Activated B cell treated with CpG ODN at 0.5 μM for 24 hours (primary cell): ENCODE measurements at regions of chr16 and their contacts with region 1.

Region 1: DNA sequence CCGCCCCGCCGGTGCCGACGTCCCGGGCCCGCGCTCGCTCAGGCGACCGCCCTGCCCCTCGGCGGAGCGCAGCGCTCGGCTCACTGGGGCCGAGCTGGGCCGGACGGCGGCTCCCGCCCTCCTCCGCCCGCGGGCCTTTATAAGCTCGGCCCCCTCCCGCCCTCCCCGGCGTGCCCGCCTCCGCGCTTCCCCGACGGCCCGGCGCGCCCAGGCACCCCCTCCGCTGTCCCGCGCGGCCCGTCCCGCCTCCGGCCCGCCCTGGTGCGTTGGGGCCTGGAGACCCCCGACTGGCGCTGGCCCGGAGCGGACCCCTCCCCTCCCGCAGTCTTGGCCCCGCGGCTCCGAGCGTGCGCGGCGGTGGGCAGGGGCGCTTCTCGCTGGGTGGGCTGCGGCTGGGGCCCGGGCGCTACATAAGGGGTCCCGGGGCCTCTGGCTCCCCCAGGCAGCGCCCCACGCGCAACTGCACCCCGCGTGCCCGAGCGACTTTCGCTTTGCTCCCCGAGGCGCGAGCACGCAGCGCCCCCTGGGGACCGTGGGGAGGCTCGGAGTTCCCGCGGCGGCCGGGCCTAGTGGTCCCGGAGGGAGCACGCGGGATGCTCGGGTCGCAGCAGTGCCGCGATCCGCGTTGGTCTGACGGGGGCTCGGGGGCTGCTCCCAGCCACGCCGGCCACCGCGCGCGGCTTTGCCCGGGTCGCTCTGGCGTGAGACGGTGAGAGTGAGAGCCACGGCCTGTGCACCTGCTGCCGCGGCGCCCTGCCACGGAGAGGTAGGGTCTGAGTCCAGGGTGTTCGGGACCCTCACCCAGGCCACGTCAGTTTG is at the start of gene PIEZO1:
- DNase-seq: peak; percentile 78
- ATAC-seq: peak; percentile 28
- H3K4me3 Mint-ChIP-seq: peak within 1 kb of the TSS; percentile 85
- H3K27ac Mint-ChIP-seq: peak within 1 kb of the TSS; percentile 76
- H3K4me1 Mint-ChIP-seq: peaks cover 47% of the 10 kb centered on the region
- H3K27me3 Mint-ChIP-seq: no peaks in the 10 kb centered on the region
- CTCF ChIP-seq: no peak
- total RNA-seq, gene PIEZO1: 75.2 and 85.9 TPM in 2 replicates

Region 2: DNA sequence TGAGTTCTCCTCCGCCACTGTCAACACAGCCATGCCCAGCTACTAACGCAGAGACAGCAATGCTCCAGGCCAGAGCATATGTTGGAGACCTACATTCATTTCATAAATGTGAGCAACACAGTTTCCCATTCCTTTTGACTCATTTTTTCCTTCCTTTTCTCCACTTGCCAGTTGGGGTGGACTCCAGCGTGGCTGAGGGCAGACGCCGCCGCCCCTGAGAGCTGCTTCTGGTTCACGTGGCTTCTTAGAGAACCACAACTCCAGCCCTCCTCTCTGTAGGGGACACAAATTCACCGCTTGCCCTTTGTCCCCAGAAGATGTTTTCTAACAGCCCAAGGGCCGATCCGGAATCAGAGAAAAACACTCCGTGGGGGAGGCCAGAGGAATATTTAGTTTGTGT is 1246.7 kb before region 1 on chr16:
- CTCF ChIA-PET with region 1: no interaction called
- POLR2A ChIA-PET with region 1: no interaction called
- intact Hi-C with region 1: no loop called
- DNase-seq: no peak
- ATAC-seq: no peak
- H3K4me3 Mint-ChIP-seq: no peak overlapping the region
- H3K27ac Mint-ChIP-seq: no peak overlapping the region
- H3K4me1 Mint-ChIP-seq: no peaks in the 10 kb centered on the region
- H3K27me3 Mint-ChIP-seq: peaks cover 31% of the 10 kb centered on the region
- CTCF ChIP-seq: no peak

Region 3: DNA sequence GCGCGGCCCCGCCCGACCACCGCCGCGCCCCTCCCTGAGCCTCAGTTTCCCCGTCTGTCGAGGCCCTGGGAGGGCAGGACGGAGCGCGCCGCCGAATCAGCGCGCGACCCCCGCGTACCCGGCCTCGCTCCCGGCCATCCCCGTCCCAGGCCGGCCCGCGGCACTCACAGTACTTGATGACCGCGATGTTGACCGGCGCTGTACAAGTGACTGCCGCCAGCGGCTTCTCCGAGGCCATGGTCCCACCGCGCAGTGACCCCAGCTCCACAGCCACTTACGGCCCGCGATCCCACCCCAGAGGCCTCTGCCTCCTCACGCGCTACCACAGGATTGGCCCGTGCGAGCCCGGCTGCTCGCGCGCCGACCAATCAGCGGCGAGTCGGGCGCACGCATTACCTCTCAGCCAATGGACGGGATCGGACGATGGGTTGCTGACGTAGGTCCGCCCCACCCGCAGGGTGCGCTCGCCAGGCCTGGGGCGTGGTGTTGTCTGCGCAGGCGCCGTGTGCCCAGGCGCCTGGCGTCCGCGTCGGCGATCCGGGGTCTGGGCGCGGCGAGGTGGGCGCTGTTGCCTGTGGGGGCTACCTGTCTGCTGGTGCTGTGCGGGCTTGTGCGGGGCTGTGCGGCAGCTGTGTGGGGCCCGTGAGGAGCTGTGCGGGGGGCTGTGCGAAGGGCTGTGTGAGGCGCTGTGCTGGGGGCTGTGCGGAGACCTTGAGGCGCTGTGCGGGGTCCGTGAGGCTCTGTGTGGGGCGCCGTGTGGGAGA is 122.3 kb before region 1 on chr16 and contains the start of gene MVD:
- CTCF ChIA-PET with region 1: no interaction called
- POLR2A ChIA-PET with region 1: no interaction called
- intact Hi-C with region 1: loop called (anchors 5 kb)
- DNase-seq: peak; percentile 89
- ATAC-seq: peak; percentile 94
- H3K4me3 Mint-ChIP-seq: peak within 1 kb of the TSS; percentile 94
- H3K27ac Mint-ChIP-seq: peak within 1 kb of the TSS; percentile 90
- H3K4me1 Mint-ChIP-seq: peaks cover 31% of the 10 kb centered on the region
- H3K27me3 Mint-ChIP-seq: no peaks in the 10 kb centered on the region
- CTCF ChIP-seq: no peak
- total RNA-seq, gene MVD: 115 and 140 TPM in 2 replicates

Region 4: DNA sequence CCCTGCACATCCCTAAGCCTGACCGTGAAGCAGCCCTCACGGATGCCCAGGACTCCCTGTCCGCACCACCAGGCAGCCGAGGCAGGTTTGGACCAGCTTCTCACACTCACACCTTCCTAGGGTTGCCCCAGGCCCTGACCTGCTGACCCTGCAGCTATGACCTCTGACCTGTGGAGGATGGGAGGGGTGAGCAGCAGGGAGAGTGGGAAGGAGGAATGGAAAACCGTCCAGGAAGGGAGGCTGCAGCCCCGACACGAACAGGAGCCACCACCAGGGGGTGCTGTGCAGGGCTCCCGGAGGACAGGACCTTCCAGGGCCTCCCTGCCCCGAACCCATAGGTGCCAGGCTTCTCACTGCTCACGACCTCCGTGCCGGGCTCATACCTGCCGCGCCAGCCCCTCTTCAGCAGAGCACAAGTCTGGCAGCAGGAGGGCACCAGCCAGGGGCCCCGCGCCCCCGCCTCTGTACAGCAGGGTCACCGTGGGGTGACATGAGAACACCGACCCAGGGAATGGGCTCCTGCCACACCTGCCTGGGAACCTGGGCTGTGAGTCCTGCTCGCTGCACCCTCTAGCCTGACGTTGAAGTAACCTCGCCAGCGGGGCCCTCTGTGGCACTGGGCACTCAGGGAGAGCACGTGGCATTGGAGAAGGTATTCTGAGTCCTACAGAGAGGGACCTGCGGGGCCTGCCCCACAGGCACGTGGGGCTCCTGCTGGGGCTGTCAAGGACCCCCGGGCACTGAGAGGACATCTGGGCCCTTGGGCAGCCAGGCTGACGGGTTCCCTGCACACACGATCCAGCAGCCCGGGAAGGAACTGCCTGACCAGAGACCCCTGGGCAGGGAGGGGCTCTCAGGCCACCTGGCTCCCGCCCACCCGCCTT is 41.4 kb before region 1 on chr16:
- CTCF ChIA-PET with region 1: interaction called, 12 read pairs
- POLR2A ChIA-PET with region 1: interaction called, 30 read pairs
- intact Hi-C with region 1: loop called (anchors 1 kb)
- DNase-seq: peak; percentile 67
- ATAC-seq: no peak
- H3K4me3 Mint-ChIP-seq: no peak overlapping the region
- H3K27ac Mint-ChIP-seq: no peak overlapping the region
- H3K4me1 Mint-ChIP-seq: peaks cover 55% of the 10 kb centered on the region
- H3K27me3 Mint-ChIP-seq: no peaks in the 10 kb centered on the region
- CTCF ChIP-seq: peak; percentile 89

Region 5: GRCh38 chr16:88770461-88771293 is 14.6 kb before region 1 on chr16:
- CTCF ChIA-PET with region 1: interaction called, 9 read pairs
- POLR2A ChIA-PET with region 1: interaction called, 30 read pairs
- intact Hi-C with region 1: loop called (anchors 1 kb)
- DNase-seq: peak; percentile 43
- ATAC-seq: peak; percentile 54
- H3K4me3 Mint-ChIP-seq: peak overlapping the region; percentile 19
- H3K27ac Mint-ChIP-seq: peak overlapping the region; percentile 35
- H3K4me1 Mint-ChIP-seq: peaks cover 61% of the 10 kb centered on the region
- H3K27me3 Mint-ChIP-seq: no peaks in the 10 kb centered on the region
- CTCF ChIP-seq: no peak

Region 6: DNA sequence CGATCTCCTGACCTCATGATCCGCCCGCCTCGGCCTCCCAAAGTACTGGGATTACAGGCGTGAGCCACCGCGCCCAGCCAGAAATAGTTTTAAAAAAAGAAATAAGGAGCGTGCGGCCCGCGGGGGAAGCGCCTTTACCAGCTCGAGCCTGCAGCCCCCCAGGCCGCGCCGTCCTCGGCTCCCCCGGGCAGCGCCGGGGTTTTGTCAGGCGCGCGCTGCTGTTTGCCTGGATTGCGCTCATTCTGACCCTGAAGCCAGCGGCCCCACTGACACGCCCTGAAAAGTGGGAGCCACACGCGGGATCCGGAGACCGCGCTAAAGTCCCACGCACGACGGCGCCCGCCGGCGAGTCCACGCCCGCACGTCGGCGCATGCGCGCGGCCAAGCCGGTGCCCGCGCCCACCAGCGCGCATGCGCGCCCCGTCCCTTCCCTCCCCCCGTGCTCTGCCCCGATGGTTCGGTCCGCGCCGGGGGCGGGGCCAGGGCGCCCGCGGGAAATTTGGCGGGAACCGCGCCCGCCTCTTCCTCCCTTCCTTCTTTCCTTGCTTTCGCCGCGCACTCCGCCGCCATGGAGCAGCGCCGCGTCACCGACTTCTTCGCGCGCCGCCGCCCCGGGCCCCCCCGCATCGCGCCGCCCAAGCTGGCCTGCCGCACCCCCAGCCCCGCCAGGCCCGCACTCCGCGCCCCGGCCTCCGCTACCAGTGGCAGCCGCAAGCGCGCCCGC is 18.1 kb after region 1 on chr16 and contains the start of gene CDT1:
- CTCF ChIA-PET with region 1: interaction called, 4 read pairs
- POLR2A ChIA-PET with region 1: interaction called, 52 read pairs
- intact Hi-C with region 1: loop called (anchors 1 kb)
- DNase-seq: peak; percentile 88
- ATAC-seq: peak; percentile 64
- H3K4me3 Mint-ChIP-seq: peak within 1 kb of the TSS; percentile 79
- H3K27ac Mint-ChIP-seq: peak within 1 kb of the TSS; percentile 79
- H3K4me1 Mint-ChIP-seq: peaks cover 22% of the 10 kb centered on the region
- H3K27me3 Mint-ChIP-seq: no peaks in the 10 kb centered on the region
- CTCF ChIP-seq: no peak
- total RNA-seq, gene CDT1: 4.3 and 5.5 TPM in 2 replicates

Region 7: DNA sequence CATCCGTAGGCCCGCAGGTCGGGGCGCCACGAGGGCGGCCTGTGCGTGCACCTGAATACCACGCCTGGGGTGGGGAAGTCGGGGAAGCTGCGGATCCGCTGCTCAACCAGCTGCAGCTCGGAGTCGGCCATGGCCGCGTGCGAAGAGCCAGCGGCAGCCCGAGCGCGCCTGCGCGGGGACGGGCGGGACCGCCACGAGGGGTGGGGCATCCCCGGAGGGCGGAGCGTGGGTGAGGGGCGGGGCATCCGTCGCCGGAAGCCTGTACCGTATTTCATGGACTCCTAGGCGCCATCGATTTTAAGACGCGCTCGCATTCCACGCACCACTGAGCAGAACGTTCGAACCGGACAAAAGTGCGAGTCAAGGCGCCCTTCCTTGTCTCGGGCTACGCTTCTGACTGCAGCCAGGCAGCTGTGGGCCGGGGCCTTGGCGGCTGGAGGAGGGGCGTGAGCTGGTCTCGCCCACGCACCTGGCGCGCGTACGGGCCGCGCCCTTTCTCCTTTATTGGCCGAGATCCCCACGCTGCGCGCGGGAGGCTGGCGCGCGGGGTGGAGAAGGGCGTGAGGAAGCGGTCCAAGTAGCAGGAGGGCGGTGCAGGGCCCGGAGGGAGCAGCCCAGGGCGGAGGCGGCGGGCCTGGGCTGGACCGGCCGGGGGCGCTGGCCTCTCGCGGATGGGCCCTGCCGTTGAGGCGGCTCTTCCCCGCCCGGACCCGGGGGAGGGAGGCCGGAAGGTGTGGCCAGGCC is 26.6 kb after region 1 on chr16 and contains the start of gene APRT:
- CTCF ChIA-PET with region 1: interaction called, 3 read pairs
- POLR2A ChIA-PET with region 1: interaction called, 52 read pairs
- intact Hi-C with region 1: loop called (anchors 2 kb)
- DNase-seq: peak; percentile 99
- ATAC-seq: peak; percentile 86
- H3K4me3 Mint-ChIP-seq: peak within 1 kb of the TSS; percentile 91
- H3K27ac Mint-ChIP-seq: peak within 1 kb of the TSS; percentile 97
- H3K4me1 Mint-ChIP-seq: peaks cover 17% of the 10 kb centered on the region
- H3K27me3 Mint-ChIP-seq: no peaks in the 10 kb centered on the region
- CTCF ChIP-seq: no peak
- total RNA-seq, gene APRT: 198 and 209 TPM in 2 replicates